Activated B cell treated with CpG ODN at 0.5 μM for 24 hours (primary cell): ENCODE measurements at regions of chr7 and their contacts with region 1.

Region 1: GRCh38 chr7:28926871-28927597 is 31.1 kb downstream of the TRIL start:
- DNase-seq: peak; percentile 41
- ATAC-seq: peak; percentile 97
- H3K4me3 Mint-ChIP-seq: peak overlapping the region; percentile 92
- H3K27ac Mint-ChIP-seq: no peak overlapping the region
- H3K4me1 Mint-ChIP-seq: peaks cover 19% of the 10 kb centered on the region
- H3K27me3 Mint-ChIP-seq: peaks cover 16% of the 10 kb centered on the region
- CTCF ChIP-seq: peak; percentile 79

Region 2: GRCh38 chr7:28410628-28411531 is 516.2 kb before region 1 on chr7:
- CTCF ChIA-PET with region 1: no interaction called
- POLR2A ChIA-PET with region 1: no interaction called
- intact Hi-C with region 1: loop called (anchors 10 kb)
- DNase-seq: peak; percentile 24
- ATAC-seq: peak; percentile 61
- H3K4me3 Mint-ChIP-seq: peak overlapping the region; percentile 81
- H3K27ac Mint-ChIP-seq: no peak overlapping the region
- H3K4me1 Mint-ChIP-seq: peaks cover 37% of the 10 kb centered on the region
- H3K27me3 Mint-ChIP-seq: peaks cover 48% of the 10 kb centered on the region
- CTCF ChIP-seq: no peak

Region 3: DNA sequence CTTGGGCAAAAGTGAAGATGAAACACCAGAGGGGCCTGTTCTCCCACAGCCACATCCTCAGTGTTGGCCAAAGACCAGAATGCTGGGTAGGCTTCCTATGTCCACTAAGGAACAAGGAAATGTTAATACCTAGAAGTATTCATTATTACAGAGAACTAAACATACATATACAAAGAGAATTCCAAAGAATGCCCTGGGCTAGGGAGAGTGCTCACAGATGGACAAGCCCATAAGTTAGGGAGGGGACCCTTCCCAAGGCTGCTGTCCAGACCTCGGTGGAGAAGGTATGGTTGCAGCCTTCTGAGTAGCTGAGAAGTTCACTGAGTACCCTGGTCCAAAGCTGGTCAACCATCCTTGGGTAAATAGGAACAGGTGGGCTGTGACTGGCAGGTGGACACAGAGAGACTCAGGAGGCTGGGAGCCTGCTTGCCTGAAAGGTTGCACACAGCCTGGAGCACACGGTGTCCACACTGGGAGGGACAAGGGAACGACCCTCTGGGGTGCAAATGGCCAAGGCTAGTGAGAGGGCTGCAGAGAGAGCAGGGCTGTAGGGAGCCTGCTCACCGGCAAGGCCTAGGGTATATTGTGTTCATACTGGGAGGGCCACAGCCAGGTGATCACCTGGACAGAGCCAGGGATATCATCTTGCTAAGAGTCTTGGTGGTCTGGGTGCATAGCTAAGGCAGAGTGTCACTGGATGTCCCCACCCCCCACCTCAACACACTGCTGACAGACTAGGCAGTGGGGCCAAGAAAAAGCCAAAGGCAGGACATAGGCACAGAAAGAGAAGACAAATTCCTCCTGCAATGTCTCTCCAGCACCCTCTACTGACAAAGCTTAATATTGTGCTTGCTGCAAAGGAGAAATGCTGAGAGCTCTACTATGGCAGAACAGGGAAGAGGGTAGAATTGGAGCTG is 179.0 kb after region 1 on chr7:
- CTCF ChIA-PET with region 1: interaction called, 26 read pairs
- POLR2A ChIA-PET with region 1: no interaction called
- intact Hi-C with region 1: loop called (anchors 1 kb)
- DNase-seq: no peak
- ATAC-seq: peak; percentile 45
- H3K4me3 Mint-ChIP-seq: no peak overlapping the region
- H3K27ac Mint-ChIP-seq: no peak overlapping the region
- H3K4me1 Mint-ChIP-seq: no peaks in the 10 kb centered on the region
- H3K27me3 Mint-ChIP-seq: peaks cover 8% of the 10 kb centered on the region
- CTCF ChIP-seq: no peak

Region 4: DNA sequence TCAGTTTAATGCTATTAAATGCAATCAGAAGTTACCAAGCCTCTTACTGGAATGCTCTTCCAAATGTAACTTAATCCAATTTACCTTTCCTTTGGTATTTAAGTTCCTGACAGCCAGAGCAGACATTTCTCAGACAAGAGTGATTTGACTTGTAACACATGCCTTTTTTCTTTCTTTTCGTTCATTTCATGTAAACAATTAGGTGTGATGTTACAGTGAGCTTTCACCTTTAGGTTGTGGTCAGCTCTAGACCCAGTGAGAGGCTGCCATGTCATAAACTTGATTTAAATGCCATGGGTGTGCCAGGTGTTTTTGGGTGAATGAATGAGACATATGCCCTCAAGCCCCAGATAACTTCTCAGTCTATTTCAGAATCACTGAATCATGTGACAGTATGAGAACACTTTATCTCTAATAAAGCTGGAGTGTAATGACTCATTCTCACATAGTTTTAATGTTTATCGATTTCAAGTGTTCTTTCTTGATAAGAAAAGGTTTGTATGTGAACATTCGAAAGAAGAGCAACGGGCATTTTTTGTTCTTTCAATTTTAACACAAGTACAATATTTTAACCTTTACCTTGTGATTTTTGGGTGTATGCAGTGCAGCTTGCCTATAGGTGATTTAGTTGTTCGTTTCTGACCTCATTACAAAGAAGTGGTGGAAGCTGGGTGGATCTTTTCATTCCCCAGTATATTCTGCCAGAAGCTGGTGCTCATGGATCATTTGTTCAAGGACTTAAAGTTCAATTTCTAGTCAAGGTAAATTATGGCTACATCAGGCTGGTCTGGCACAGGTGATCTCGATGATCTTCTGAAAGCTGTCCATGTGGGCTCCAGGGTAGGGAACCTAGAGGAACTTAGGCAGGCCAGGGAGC is 329.1 kb after region 1 on chr7:
- CTCF ChIA-PET with region 1: no interaction called
- POLR2A ChIA-PET with region 1: no interaction called
- intact Hi-C with region 1: no loop called
- DNase-seq: no peak
- ATAC-seq: no peak
- H3K4me3 Mint-ChIP-seq: no peak overlapping the region
- H3K27ac Mint-ChIP-seq: no peak overlapping the region
- H3K4me1 Mint-ChIP-seq: no peaks in the 10 kb centered on the region
- H3K27me3 Mint-ChIP-seq: no peaks in the 10 kb centered on the region
- CTCF ChIP-seq: no peak

Region 5: GRCh38 chr7:29345600-29345999 is 418.6 kb after region 1 on chr7:
- CTCF ChIA-PET with region 1: interaction called, 3 read pairs
- POLR2A ChIA-PET with region 1: no interaction called
- intact Hi-C with region 1: loop called (anchors 10 kb)
- DNase-seq: no peak
- ATAC-seq: no peak
- H3K4me3 Mint-ChIP-seq: no peak overlapping the region
- H3K27ac Mint-ChIP-seq: no peak overlapping the region
- H3K4me1 Mint-ChIP-seq: no peaks in the 10 kb centered on the region
- H3K27me3 Mint-ChIP-seq: peaks cover 1% of the 10 kb centered on the region
- CTCF ChIP-seq: no peak

Region 6: GRCh38 chr7:29408841-29409243 is 481.8 kb after region 1 on chr7:
- CTCF ChIA-PET with region 1: interaction called, 209 read pairs
- POLR2A ChIA-PET with region 1: no interaction called
- intact Hi-C with region 1: loop called (anchors 1 kb)
- DNase-seq: no peak
- ATAC-seq: peak; percentile 50
- H3K4me3 Mint-ChIP-seq: no peak overlapping the region
- H3K27ac Mint-ChIP-seq: no peak overlapping the region
- H3K4me1 Mint-ChIP-seq: no peaks in the 10 kb centered on the region
- H3K27me3 Mint-ChIP-seq: peaks cover 6% of the 10 kb centered on the region
- CTCF ChIP-seq: no peak

Region 7: GRCh38 chr7:29878081-29878688 is 951.2 kb after region 1 on chr7:
- CTCF ChIA-PET with region 1: no interaction called
- POLR2A ChIA-PET with region 1: no interaction called
- intact Hi-C with region 1: loop called (anchors 10 kb)
- DNase-seq: no peak
- ATAC-seq: peak; percentile 31
- H3K4me3 Mint-ChIP-seq: no peak overlapping the region
- H3K27ac Mint-ChIP-seq: no peak overlapping the region
- H3K4me1 Mint-ChIP-seq: peaks cover 3% of the 10 kb centered on the region
- H3K27me3 Mint-ChIP-seq: peaks cover 12% of the 10 kb centered on the region
- CTCF ChIP-seq: peak; percentile 37